Left colon (tissue), 2 donors: ENCODE measurements at regions of chr7 and their contacts with region 1.

Region 1: DNA sequence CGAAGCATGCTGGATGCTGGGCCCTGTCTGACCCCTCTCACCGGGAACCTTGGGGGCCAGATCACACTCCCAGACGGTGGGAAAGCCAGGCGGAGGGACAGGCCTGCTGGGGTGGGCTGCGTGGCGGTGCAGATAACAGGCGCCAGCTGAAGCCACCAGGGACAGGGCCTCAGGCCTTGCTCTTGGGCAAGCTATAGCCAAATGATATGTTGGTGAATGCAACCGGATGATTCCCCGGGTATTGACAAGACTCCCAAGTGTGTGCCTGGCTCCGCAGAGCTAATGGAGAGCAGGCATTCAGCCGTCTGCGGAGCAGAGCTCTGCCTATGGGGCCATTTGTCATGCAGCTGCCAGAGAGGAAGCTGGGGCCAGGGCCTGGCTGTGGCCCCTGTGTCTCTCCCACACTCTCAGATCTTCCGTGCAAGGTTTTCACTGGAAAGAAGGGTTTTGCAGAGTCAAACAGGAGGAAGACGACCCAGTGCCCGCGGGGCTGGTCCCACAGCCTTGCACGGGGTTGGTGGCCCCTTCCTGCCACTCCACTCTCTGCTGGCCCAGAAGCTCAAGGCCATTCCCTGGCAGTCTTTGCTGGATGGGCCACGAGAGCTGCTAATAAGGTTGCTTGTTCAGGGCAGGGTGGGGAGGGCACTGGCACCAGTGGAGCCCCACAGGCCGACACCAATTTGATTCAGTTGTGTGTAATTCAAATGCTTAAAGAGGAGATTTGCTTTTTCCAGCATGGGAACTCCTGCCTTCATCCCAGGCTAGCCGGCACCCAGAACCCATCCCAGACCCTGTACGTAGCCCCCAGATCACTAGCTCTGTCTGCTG is 91.8 kb downstream of the PRKAG2 start:
- DNase-seq: no peak
- ATAC-seq: no peak

Region 2: GRCh38 chr7:151940048-151940811 is 155.2 kb after region 1 on chr7:
- intact Hi-C with region 1: loop called in 1 of 2 experiments (anchors 5 kb)
- DNase-seq: no peak
- ATAC-seq: peak; percentile 61